Activated T-helper 1 cell treated with anti-CD3 and anti-CD28 coated beads, Interleukin-12 subunit alpha, Interleukin-12 subunit beta, Interleukin-2, Interleukin-4 antibody, amounts not matched to agents 30 ng/mL and 10 ng/mL and 1 ng/mL, durations not matched to agents 14 hours and 24 hours and 36 hours (primary cell): ENCODE measurements at regions of chr12 and their contacts with region 1.

Region 1: DNA sequence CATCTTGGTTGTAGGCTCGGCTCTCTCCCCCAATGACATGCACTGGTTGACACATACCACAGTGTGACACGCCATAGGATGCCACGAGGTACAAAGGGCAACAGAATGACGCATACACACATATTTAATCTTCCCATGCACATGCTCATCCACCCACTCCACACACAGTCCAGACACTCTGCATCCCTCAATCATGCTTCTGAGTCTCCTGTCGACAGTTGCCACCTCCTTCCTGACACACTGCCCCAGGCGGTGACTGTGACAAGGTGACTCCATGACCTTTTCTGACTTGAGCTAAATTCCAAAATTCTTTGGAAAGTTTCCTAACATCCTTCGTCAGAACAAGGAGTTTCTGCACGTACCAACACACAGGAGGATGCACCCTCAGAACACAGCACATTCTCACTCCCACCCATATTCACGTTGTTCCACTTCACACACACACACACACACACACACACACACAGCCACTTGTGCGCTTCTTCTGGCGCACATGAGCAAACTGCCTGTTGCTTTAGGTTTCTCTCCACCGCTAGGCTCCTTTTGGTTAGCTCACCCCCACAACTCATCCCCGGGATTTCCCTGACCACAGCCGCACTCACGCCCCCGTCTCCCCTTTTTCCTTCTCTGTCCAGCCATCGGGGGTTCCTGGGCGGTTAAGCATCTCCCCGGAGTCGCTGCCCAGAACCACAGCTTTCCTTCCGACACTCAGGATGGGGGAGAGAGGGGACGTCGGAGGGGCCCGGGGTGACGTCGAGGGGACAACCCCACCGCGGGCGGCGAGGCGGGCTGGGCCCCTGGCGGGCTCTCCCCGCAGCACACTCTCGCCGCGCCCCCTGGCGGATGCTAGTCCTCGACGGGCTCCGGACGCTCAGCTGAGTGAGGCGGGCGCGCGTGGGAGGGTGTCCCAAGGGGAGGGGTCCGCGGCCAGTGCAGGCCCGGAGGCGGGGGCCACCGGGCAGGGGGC is 524 bp upstream of the WNT1 start:
- DNase-seq: peak; percentile 72
- H3K4me3 Mint-ChIP-seq: peak overlapping the region; percentile 55
- H3K27ac Mint-ChIP-seq: peak overlapping the region; percentile 73
- H3K4me1 Mint-ChIP-seq: peaks cover 62% of the 10 kb centered on the region
- H3K27me3 Mint-ChIP-seq: peaks cover 80% of the 10 kb centered on the region

Region 2: GRCh38 chr12:48903982-48904411 is 73.6 kb before region 1 on chr12:
- intact Hi-C with region 1: loop called (anchors 5 kb)
- DNase-seq: peak; percentile 70
- H3K4me3 Mint-ChIP-seq: peak overlapping the region; percentile 68
- H3K27ac Mint-ChIP-seq: peak overlapping the region; percentile 71
- H3K4me1 Mint-ChIP-seq: peaks cover 14% of the 10 kb centered on the region
- H3K27me3 Mint-ChIP-seq: peaks cover 8% of the 10 kb centered on the region

Region 3: GRCh38 chr12:48957141-48958048 is 20.2 kb before region 1 on chr12 and contains the start of gene ARF3:
- intact Hi-C with region 1: loop called (anchors 1 kb)
- DNase-seq: peak; percentile 91
- H3K4me3 Mint-ChIP-seq: peak within 1 kb of the TSS; percentile 94
- H3K27ac Mint-ChIP-seq: peak within 1 kb of the TSS; percentile 94
- H3K4me1 Mint-ChIP-seq: peaks cover 46% of the 10 kb centered on the region
- H3K27me3 Mint-ChIP-seq: peaks cover 33% of the 10 kb centered on the region
- total RNA-seq, gene ARF3: 116 and 117 TPM in 2 replicates

Region 4: DNA sequence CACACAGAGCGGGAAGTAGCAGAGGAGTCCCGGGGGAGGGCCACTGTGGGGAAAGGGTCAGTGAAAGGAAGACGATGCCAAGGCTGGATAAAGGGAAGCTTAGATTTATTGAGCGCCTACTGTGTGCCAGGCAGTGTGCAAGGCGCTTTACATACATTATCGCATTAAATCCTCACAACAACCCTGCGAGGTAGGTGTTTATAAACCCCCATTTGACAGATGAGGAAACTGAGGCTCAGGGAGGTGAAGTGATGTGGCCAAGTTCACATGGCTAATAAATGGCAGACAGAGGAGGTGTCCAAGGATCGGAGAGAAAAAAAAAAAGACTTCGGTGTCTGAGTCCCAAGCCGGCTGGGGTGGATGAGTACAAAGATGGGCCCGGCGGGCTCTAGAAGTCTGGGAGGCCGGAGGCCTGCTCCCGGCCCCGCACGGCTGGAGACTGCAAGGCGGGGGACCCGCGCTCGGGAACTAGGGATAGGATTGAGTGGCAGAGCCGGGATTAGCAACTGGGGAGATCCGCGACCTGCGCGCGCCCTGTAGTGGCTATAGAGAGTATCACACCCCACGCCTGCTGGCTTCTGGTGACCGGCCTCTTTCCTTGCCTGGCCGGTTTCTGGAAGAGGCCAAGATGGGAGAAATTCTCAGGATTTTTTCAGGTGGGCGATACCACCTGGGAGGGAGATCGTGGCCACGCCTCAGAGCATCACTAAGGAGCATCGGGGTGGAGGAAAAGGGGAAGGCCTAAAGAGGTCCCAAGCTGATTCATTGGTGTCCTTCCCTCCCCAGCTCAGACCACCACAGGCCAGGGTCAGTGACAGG is 17.7 kb after region 1 on chr12:
- intact Hi-C with region 1: loop called (anchors 1 kb)
- DNase-seq: peak; percentile 39
- H3K4me3 Mint-ChIP-seq: no peak overlapping the region
- H3K27ac Mint-ChIP-seq: peak overlapping the region; percentile 52
- H3K4me1 Mint-ChIP-seq: peaks cover 25% of the 10 kb centered on the region
- H3K27me3 Mint-ChIP-seq: peaks cover 49% of the 10 kb centered on the region

Region 5: GRCh38 chr12:49342066-49342913 is 364.7 kb after region 1 on chr12:
- intact Hi-C with region 1: loop called (anchors 5 kb)
- DNase-seq: peak; percentile 56
- H3K4me3 Mint-ChIP-seq: peak overlapping the region; percentile 37
- H3K27ac Mint-ChIP-seq: no peak overlapping the region
- H3K4me1 Mint-ChIP-seq: peaks cover 35% of the 10 kb centered on the region
- H3K27me3 Mint-ChIP-seq: peaks cover 77% of the 10 kb centered on the region